Dorsolateral prefrontal cortex (tissue), 120 donors: ENCODE measurements at regions of chr6 and their contacts with region 1.

Region 1: GRCh38 chr6:75526502-75527127 is 33.0 kb upstream of the FILIP1 start:
- DNase-seq: peak in 4 of 10 donors; percentile 8 to 67 (median 30)
- H3K4me3 ChIP-seq: no peak overlapping the region
- H3K27ac ChIP-seq: no peak overlapping the region
- H3K27me3 ChIP-seq: no peaks in the 10 kb centered on the region
- CTCF ChIP-seq: peak; percentile 55 to 92 (median 75)

Region 2: GRCh38 chr6:75266716-75267291 is 259.8 kb before region 1 on chr6:
- intact Hi-C with region 1: loop called (anchors 5 to 10 kb)
- DNase-seq: no peak
- H3K4me3 ChIP-seq: no peak overlapping the region
- H3K27ac ChIP-seq: no peak overlapping the region
- H3K27me3 ChIP-seq: no peaks in the 10 kb centered on the region
- CTCF ChIP-seq: peak; percentile 64 to 93 (median 82)

Region 3: DNA sequence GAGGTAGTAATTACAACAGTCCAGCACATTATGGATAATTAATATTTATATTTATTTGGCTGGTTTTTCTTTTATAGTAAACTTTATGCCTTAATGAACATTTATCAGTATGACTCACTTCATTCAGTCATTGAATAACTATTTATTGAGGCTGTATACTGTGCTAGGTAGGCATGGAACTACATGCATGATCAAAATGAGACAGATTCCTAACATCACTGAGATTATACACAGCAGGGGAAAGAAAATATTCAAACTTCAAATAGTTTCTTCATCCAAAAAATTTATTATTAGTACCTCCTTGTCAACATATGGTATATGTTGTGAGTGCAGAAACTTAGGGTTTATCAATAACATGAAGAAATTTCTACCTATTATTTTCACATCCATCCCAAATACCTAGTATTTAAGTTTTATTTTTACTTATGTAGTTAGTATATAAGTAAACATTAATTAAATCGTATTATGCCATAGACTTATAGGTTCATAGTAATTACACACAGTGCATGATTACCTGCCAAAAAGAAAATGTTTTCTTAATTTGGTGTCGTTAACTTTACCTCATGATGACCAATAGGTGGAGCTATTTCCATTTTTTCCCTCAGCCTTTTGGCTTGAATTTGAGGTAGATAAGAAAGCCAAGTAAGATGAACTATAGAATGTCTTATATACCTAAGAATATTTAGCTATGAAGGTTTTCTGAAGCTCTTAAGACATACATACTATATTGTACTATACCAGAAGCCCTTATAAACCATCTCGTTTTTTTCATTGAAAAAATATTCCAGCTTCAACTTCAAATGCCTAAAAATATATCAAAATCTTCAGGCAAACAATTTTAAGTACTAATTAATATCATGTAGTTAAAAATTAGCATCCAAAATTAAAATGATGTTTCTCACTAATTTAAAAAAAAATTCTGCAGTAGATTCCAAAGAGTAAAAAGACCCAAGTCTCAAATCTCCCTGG is 229.5 kb before region 1 on chr6:
- intact Hi-C with region 1: loop called (anchors 5 kb)
- DNase-seq: no peak
- H3K4me3 ChIP-seq: no peak overlapping the region
- H3K27ac ChIP-seq: no peak overlapping the region
- H3K27me3 ChIP-seq: no peaks in the 10 kb centered on the region
- CTCF ChIP-seq: peak; percentile 59 to 92 (median 80)